ENCODE measurements at regions of chr18 and their contacts with region 1.

Region 1: DNA sequence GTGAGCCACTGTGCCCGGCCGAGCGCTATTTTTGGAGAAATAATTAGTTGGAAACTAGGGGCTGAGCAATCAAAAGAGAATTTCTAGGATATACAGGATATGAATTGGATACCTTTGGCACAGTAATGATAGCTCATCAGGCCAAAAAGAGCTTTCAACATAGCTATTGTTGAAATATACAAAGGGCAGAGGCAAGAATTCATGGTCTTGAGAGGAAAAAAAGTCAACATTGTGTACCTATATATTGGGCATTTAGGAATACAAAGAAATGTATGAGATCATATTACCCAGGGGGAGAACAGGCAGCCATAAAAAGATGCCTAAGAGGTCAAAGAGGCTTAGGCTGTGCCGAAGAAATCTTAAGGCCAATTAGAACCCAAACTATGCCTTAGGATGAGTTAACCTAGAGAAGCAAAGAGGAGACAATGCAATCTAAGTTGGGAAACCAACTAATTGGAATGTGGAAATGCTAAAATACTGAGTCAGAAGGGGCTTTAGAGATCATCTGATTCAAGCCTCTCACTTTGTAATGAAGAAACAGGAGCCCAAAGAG is 99.0 kb downstream of the RBBP8 start:
- DNase-seq: peak; percentile 45
- H3K4me3 ChIP-seq: no peak overlapping the region
- H3K27ac ChIP-seq: peak overlapping the region; percentile 20
- H3K4me1 ChIP-seq: peaks cover 10% of the 10 kb centered on the region
- H3K27me3 ChIP-seq: no peaks in the 10 kb centered on the region
- CTCF ChIP-seq: no peak
- POLR2A ChIP-seq: no peak

Region 2: DNA sequence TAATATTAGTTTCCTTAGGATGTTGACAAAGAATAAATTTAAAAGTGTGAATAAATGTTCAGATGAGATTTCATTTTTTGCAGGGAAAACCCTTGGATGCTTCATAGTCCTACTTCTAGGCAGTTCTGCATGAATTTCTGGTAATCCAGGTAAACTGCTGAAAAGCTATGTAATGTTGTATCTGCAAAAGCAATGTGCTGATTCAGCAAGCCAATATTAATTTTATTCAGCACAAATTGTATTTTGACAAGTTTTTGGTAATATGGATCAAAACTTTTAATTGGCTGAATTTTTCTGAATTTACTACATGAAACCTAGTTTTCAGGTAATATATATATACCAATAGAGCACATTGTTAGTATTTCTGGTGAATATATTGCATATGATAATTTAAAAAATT is 116.8 kb before region 1 on chr18:
- CTCF ChIA-PET with region 1: no interaction called
- POLR2A ChIA-PET with region 1: no interaction called
- dilution Hi-C with region 1: no loop called
- intact Hi-C with region 1: no loop called
- DNase-seq: no peak
- H3K4me3 ChIP-seq: no peak overlapping the region
- H3K27ac ChIP-seq: no peak overlapping the region
- H3K4me1 ChIP-seq: no peaks in the 10 kb centered on the region
- H3K27me3 ChIP-seq: peaks cover 0 to 2% of the 10 kb centered on the region in 2 experiments
- CTCF ChIP-seq: no peak
- POLR2A ChIP-seq: no peak

Region 3: GRCh38 chr18:23194155-23194996 is 162.3 kb after region 1 on chr18:
- CTCF ChIA-PET with region 1: no interaction called
- POLR2A ChIA-PET with region 1: no interaction called
- dilution Hi-C with region 1: no loop called
- intact Hi-C with region 1: loop called (anchors 10 kb)
- DNase-seq: peak; percentile 44
- H3K4me3 ChIP-seq: no peak overlapping the region
- H3K27ac ChIP-seq: peak overlapping the region; percentile 49
- H3K4me1 ChIP-seq: peaks cover 35% of the 10 kb centered on the region
- H3K27me3 ChIP-seq: no peaks in the 10 kb centered on the region
- CTCF ChIP-seq: no peak
- POLR2A ChIP-seq: no peak

Region 4: DNA sequence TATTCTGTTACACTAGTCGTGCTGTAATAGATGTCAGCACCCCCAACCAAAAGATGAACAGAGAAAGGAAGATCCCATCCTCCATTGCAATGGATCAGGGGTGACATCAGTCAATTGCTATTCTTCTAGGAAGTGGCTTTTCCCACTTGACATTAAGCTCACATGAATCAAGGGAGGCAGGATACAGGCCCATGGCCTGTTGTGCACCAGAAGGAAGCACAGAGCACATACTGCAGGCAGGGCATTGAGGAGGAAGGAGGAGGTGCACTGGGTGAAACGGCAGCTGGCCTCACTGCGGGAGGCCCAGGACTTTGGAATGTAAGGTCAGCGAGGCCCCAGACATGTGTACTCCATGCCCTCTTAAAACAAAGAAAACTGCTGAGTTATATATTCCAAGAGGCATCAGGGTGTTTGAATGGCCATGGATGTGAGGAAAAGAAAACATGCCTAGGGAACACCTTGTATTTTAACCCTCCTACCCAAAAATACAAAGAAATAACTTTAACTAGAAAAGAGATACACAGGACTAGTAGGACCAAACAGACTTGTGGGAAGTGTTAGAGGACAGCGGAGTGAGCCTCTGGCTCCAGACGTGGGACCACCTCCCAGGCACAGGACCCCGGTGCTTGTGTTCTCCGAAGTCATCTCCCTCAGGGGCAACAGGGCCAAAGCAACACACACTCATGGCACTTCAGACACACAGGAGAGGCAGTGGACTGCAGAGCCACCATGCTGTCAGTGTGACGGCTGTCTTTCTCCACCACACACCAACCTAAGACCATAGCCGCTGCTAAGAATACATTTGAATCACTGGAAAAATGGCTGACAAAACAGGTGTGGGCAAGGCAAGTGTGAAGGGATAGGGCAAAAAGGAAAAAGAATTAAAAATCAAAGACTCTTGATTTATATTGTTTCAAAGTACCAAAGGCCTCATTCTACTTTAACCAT is 369.6 kb after region 1 on chr18:
- CTCF ChIA-PET with region 1: interaction called, 12 read pairs
- POLR2A ChIA-PET with region 1: no interaction called
- dilution Hi-C with region 1: no loop called
- intact Hi-C with region 1: no loop called
- DNase-seq: peak; percentile 97
- H3K4me3 ChIP-seq: no peak overlapping the region
- H3K27ac ChIP-seq: peak overlapping the region; percentile 92
- H3K4me1 ChIP-seq: peaks cover 22% of the 10 kb centered on the region
- H3K27me3 ChIP-seq: no peaks in the 10 kb centered on the region
- CTCF ChIP-seq: no peak
- POLR2A ChIP-seq: peak; percentile 80

Region 5: GRCh38 chr18:23479829-23480505 is 447.9 kb after region 1 on chr18:
- CTCF ChIA-PET with region 1: interaction called, 4 read pairs
- POLR2A ChIA-PET with region 1: interaction called, 12 read pairs
- dilution Hi-C with region 1: no loop called
- intact Hi-C with region 1: no loop called
- DNase-seq: no peak
- H3K4me3 ChIP-seq: no peak overlapping the region
- H3K27ac ChIP-seq: no peak overlapping the region
- H3K4me1 ChIP-seq: peaks cover 8% of the 10 kb centered on the region
- H3K27me3 ChIP-seq: no peaks in the 10 kb centered on the region
- CTCF ChIP-seq: no peak
- POLR2A ChIP-seq: no peak